Aorta (tissue), 5 donors: ENCODE measurements at regions of chr6 and their contacts with region 1.

Region 1: DNA sequence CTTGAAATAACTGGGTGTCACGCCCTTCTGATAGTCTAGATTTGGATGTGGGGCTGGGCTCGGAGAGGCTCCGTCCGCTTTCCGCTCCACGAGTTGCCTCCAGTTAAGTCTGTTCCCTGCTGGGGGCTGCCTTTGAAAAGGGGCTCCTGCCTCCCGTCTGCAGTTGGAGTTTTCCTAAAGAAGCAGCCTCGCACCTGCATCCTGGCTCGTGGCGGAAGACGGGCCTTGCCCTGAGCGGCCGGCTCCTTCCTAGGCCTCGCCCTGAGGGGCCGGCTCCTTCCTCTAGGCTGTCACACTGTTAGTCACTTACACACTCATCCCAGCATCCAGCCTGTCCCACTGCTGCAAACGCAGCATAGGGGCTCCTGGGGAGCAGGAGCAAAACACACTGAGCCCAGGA is 74.4 kb downstream of the SMOC2 start:
- DNase-seq: no peak
- ATAC-seq: no peak
- H3K4me3 ChIP-seq: no peak overlapping the region
- H3K27ac ChIP-seq: no peak overlapping the region
- H3K4me1 ChIP-seq: no peaks in the 10 kb centered on the region
- H3K27me3 ChIP-seq: no peaks in the 10 kb centered on the region

Region 2: GRCh38 chr6:168451805-168452517 is 63.4 kb before region 1 on chr6:
- intact Hi-C with region 1: no loop called
- DNase-seq: no peak
- ATAC-seq: peak; percentile 53
- H3K4me3 ChIP-seq: no peak overlapping the region
- H3K27ac ChIP-seq: peak overlapping the region; percentile 90
- H3K4me1 ChIP-seq: peaks cover 2 to 12% of the 10 kb centered on the region in 2 donors
- H3K27me3 ChIP-seq: no peaks in the 10 kb centered on the region

Region 3: DNA sequence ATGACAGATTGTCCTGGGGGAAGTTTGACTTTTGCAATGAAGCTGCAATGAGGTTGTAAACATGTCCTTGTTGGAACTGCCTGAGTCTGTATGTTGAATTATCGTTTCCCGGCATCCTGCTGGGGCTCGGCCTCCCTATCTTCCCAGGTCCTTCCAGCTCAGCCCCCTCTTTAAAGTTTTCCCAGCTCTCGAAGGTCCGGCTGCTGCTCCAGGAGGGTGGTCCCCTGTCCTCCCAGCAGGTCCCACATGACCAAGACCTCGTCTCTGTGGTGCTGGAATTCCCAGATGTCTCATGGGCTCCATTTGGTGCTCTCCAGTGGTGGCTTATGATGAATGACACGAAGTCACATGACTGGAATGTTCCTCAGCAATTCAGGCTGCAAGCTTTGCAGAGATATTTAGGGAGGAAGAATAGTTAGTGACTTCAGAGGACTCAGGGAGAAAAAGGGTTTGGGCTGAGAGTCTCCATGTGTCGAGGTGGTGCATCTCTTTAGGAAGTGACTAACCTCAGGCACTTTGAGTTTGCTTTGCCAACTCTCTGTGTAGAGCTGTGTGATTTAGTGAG is 53.0 kb before region 1 on chr6:
- intact Hi-C with region 1: loop called in 1 of 2 experiments (anchors 5 kb)
- DNase-seq: no peak
- ATAC-seq: no peak
- H3K4me3 ChIP-seq: no peak overlapping the region
- H3K27ac ChIP-seq: no peak overlapping the region
- H3K4me1 ChIP-seq: peaks cover 2 to 3% of the 10 kb centered on the region in 2 donors
- H3K27me3 ChIP-seq: no peaks in the 10 kb centered on the region

Region 4: DNA sequence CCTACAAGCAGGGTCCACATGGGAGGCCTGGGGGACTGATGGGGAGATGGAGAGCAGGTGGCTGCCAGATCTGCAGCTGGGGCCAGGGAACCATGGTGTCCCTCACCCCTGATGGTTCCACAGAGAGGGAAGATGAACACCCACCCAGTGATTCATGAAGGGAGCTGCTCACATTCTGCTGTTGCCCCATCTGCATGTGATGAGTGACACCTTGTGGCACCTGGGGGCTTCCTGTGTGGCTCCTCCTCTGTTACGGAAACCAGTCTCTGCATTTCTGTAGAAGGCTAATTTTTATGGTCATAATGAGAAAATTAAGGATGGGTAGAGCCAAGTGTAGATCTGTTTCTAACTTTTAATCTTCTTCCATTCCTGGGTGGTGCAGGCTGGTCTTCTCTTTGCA is 142.7 kb after region 1 on chr6:
- intact Hi-C with region 1: no loop called
- DNase-seq: no peak
- ATAC-seq: no peak
- H3K4me3 ChIP-seq: no peak overlapping the region
- H3K27ac ChIP-seq: no peak overlapping the region
- H3K4me1 ChIP-seq: no peaks in the 10 kb centered on the region
- H3K27me3 ChIP-seq: no peaks in the 10 kb centered on the region